Mammary epithelial cell (primary cell): ENCODE measurements at regions of chr12 and their contacts with region 1.

Region 1: GRCh38 chr12:46675736-46676135 is 150.1 kb downstream of the SLC38A4 start:
- DNase-seq: peak; percentile 36
- H3K4me3 ChIP-seq: no peak overlapping the region
- H3K27ac ChIP-seq: peak overlapping the region; percentile 94
- H3K4me1 ChIP-seq: peaks cover 63% of the 10 kb centered on the region
- H3K27me3 ChIP-seq: no peaks in the 10 kb centered on the region
- CTCF ChIP-seq: peak; percentile 51 to 55

Region 2: GRCh38 chr12:45914090-45914489 is 761.6 kb before region 1 on chr12:
- CTCF ChIA-PET with region 1: no interaction called
- dilution Hi-C with region 1: no loop called
- in situ Hi-C with region 1: no loop called
- intact Hi-C with region 1: no loop called
- DNase-seq: peak; percentile 75
- H3K4me3 ChIP-seq: no peak overlapping the region
- H3K27ac ChIP-seq: no peak overlapping the region
- H3K4me1 ChIP-seq: no peaks in the 10 kb centered on the region
- H3K27me3 ChIP-seq: no peaks in the 10 kb centered on the region
- CTCF ChIP-seq: no peak

Region 3: DNA sequence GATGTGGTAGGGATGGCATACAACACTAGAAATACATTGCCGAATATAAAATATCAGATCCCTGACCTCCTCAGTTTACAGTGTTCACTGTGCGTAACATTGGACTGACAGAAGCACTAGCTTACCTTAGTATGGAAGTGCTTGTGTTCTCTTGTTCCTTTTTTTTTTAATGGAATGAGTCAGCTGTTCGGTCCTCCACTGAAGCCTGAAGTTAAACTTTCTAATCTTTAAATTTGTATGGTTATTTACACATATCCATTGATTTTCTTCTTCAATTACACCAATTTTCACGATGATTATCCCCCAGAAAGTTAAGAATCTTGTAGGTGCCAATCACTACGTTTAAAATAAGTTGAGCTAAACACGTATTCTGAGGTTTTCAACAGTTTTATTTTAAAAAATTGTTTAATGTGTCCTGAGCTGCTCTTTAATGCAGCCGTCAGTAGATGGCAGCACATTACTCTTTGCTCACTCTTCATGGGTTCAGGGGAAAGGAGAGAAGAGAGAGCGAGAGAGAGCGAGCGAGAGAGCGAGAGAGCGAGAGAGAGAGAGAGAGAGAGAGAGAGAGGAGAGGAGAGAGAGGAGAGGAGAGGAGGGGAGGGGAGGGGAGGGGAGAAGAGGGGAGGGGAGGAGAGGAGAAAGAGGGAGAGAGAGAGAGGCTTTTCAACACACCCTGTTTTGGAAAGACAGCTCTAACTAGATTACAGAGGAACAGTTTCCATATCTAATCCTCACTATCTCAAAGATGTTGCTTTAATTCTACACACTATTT is 550.7 kb before region 1 on chr12:
- CTCF ChIA-PET with region 1: no interaction called
- dilution Hi-C with region 1: no loop called
- in situ Hi-C with region 1: no loop called
- intact Hi-C with region 1: loop called (anchors 10 kb)
- DNase-seq: peak; percentile 74
- H3K4me3 ChIP-seq: peak overlapping the region in 1 of 3 experiments; percentile 32
- H3K27ac ChIP-seq: no peak overlapping the region
- H3K4me1 ChIP-seq: peaks cover 10% of the 10 kb centered on the region
- H3K27me3 ChIP-seq: no peaks in the 10 kb centered on the region
- CTCF ChIP-seq: peak; percentile 71 to 73

Region 4: GRCh38 chr12:46342562-46343033 is 333.1 kb before region 1 on chr12:
- CTCF ChIA-PET with region 1: no interaction called
- dilution Hi-C with region 1: no loop called
- in situ Hi-C with region 1: no loop called
- intact Hi-C with region 1: loop called (anchors 1 kb)
- DNase-seq: peak; percentile 69
- H3K4me3 ChIP-seq: no peak overlapping the region
- H3K27ac ChIP-seq: no peak overlapping the region
- H3K4me1 ChIP-seq: peaks cover 13% of the 10 kb centered on the region
- H3K27me3 ChIP-seq: no peaks in the 10 kb centered on the region
- CTCF ChIP-seq: peak; percentile 34 to 52

Region 5: DNA sequence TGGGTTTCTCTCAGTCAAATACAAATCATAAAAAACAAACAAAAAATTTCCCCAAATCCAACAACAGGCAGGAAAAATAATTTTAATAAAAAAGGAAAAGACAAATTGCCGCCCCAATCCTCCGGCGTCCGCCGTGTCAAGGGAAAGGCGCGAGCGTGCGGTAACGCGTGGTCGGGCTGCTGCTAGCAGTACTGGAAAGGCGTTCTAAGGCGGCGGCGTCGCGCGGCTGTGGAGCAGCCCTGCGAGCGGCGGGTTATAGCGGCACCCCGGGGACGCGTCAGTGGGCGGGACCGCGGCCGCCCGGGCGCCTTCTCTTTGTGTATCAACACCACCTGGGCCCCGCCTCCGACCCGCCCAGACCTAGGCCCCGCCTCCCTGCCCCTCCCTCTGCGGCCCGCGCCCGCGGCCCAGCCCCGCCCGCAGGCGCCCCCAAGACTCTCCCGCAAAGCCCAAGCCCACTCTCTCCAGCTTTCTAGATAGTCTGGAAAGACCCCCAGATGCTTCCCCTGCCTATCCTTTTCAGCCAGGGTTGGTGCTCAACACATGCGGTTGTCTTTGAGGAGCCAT is 303.1 kb before region 1 on chr12 and contains the start of gene SLC38A2:
- CTCF ChIA-PET with region 1: interaction called, 24 read pairs
- dilution Hi-C with region 1: loop called (anchors 5 kb)
- in situ Hi-C with region 1: no loop called
- intact Hi-C with region 1: loop called (anchors 1 kb)
- DNase-seq: peak; percentile 91
- H3K4me3 ChIP-seq: peak within 1 kb of the TSS; percentile 91 to 95 (median 92)
- H3K27ac ChIP-seq: peak within 1 kb of the TSS; percentile 98
- H3K4me1 ChIP-seq: peaks cover 27% of the 10 kb centered on the region
- H3K27me3 ChIP-seq: no peaks in the 10 kb centered on the region
- CTCF ChIP-seq: no peak
- total RNA-seq, gene SLC38A2: 774 to 995 TPM

Region 6: DNA sequence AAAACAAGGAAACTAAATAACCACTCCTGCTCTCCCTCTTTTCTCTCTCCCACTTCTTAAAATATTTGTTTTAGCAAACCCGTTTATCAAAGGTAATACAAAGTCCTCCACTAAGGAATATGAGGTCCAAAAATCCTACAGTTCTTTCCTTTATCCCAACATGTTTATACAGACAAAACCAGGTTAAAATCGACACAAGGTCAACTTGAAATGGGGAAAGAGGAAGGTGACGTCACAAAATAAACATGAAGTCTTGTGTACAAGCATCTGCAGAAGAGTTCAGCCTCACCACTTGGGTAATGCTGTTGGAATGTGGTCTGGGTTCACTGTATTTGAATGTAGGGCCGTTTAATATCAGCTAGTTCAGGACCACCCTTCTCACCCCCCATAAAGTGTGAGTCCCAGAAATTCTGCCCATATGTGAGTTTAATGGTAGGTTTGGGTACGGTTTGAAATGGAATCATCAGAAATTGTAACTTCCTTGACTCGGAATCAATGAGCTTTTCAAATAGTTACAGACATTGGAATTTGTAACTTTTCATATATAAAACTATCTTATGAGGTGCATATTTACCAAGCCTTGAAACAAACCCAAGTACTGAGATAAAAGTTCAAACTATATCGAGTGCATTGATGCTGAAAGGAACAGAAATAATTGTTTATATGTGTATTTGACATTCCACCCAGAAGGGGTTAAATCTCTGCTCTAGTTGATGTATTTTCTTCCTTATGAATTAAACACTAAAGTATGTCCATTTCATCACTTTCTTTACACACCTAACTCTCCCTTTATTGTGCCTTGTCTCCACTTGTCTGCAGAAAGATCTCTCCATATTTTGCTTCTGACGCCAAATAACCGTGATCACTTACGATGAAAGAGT is 183.0 kb before region 1 on chr12:
- CTCF ChIA-PET with region 1: interaction called, 4 read pairs
- dilution Hi-C with region 1: no loop called
- in situ Hi-C with region 1: no loop called
- intact Hi-C with region 1: loop called (anchors 2 kb)
- DNase-seq: peak; percentile 85
- H3K4me3 ChIP-seq: no peak overlapping the region
- H3K27ac ChIP-seq: peak overlapping the region; percentile 94
- H3K4me1 ChIP-seq: peaks cover 56% of the 10 kb centered on the region
- H3K27me3 ChIP-seq: no peaks in the 10 kb centered on the region
- CTCF ChIP-seq: peak; percentile 12 to 17

Region 7: GRCh38 chr12:46711756-46712155 is 36.0 kb after region 1 on chr12:
- CTCF ChIA-PET with region 1: no interaction called
- dilution Hi-C with region 1: no loop called
- in situ Hi-C with region 1: no loop called
- intact Hi-C with region 1: no loop called
- DNase-seq: no peak
- H3K4me3 ChIP-seq: no peak overlapping the region
- H3K27ac ChIP-seq: no peak overlapping the region
- H3K4me1 ChIP-seq: no peaks in the 10 kb centered on the region
- H3K27me3 ChIP-seq: no peaks in the 10 kb centered on the region
- CTCF ChIP-seq: no peak

Region 8: DNA sequence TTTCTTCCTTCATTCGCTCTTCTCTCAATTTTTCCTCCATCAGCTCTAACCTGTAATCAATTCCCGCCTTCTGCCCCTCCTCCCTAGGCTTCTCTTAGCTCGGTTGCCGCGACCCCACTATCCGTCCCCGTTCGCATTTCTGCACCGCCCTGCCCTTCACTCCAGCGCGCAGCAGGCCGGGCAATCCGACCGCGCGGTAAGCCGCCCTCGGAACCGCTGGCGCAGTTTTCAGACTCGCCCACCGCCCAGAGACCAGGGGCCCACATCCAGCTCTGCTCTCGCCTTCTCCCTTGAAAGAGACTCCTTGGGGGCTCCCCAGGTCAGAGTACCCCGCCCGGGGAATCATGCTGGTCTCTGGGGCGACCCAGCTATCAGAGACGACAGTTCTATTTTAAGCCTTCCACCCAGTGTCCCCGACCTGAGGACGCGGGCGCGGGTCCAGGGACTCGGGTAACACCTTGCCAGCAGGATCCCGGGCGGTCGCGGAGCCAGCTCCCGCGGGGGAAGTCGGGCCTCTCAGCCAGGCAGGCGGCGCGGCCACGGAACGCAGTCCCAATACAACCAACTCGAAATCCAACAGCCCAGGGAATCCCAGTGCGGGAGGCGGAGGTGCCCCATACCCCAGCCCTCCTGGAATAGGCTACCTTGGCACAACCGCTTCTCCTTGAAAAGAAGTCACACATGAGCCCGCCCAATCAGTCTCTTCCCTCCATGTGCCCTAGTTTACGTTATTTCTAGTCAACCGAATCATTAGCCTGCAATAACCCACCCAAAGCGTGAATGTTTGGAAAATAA is 155.8 kb after region 1 on chr12:
- CTCF ChIA-PET with region 1: no interaction called
- dilution Hi-C with region 1: no loop called
- in situ Hi-C with region 1: no loop called
- intact Hi-C with region 1: loop called (anchors 5 kb)
- DNase-seq: no peak
- H3K4me3 ChIP-seq: peak overlapping the region; percentile 40 to 48 (median 42)
- H3K27ac ChIP-seq: no peak overlapping the region
- H3K4me1 ChIP-seq: peaks cover 14% of the 10 kb centered on the region
- H3K27me3 ChIP-seq: no peaks in the 10 kb centered on the region
- CTCF ChIP-seq: no peak

Region 9: DNA sequence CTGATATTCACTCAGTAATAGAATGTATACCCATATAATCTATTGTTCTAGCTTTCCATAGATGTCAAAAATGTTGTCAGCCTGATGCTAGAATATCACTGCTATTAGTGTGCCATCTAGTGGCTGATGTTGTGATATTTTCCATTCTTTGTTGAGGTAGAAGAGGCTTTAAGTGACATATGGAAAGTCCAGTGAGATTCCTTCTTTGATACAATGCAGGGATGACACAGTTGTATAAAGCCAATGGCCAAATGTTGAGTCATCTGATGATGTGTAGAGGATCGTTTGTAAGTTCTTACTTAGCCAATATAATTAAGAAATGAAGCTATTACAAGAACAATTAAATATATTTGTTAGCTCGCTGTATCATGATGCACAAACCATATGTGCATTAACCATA is 345.6 kb after region 1 on chr12:
- CTCF ChIA-PET with region 1: interaction called, 4 read pairs
- dilution Hi-C with region 1: no loop called
- in situ Hi-C with region 1: loop called in 1 of 2 experiments (anchors 25 kb)
- intact Hi-C with region 1: loop called (anchors 1 kb)
- DNase-seq: peak; percentile 93
- H3K4me3 ChIP-seq: no peak overlapping the region
- H3K27ac ChIP-seq: peak overlapping the region; percentile 61
- H3K4me1 ChIP-seq: peaks cover 51% of the 10 kb centered on the region
- H3K27me3 ChIP-seq: no peaks in the 10 kb centered on the region
- CTCF ChIP-seq: peak; percentile 56 to 67